Activated naive CD4-positive, alpha-beta T cell treated with anti-CD3 and anti-CD28 coated beads for 36 hours (primary cell): ENCODE measurements at regions of chr12 and their contacts with region 1.

Region 1: DNA sequence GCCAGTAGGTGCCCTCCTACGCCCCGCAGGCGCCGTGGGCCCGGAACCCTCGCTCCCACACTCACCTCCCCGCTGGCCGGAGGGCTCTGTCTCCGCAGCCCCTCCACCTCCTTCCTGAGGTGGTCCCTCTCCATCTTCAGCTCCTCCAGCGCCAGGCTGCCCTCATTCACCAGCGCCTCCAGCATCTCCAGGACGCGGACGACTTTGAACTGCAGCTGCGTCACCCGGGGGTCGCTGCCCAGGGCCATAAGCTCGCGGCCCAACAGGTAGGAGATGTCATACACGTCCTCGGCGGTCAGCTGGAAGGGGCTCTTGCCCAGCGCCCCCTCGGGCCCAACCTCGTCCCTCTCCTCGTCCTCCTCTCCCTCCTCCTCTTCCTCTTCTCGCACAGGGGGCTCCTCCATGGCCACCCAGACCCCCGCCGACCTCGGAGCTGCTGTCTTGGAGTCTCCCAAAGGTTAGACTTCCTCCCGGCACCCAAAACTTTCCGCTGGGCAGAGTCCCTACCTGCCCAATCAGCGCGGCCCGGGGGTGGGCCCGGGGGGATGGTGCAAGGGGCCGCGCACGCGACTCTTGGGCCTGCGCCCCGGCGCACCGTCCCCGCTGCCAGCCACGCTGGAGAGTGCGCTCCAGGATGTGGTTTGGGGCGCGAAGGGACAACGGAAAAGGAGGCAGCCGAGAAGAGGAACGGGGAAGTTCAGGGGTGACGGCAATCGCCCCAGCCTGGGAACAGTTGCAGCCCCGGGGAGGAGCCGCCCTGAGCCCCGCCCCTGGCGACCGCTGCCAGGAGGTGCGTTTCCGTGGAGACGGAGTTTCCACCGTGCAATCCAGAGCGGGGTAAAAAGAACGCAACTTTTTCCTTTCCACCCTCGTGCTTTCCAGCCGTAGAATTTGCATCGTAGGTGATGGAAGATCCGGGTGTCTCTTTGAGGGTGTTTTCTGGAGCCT is at the start of gene RILPL2:
- DNase-seq: peak; percentile 97
- H3K4me3 Mint-ChIP-seq: peak within 1 kb of the TSS; percentile 92
- H3K27ac Mint-ChIP-seq: peak within 1 kb of the TSS; percentile 93
- H3K4me1 Mint-ChIP-seq: peaks cover 43% of the 10 kb centered on the region
- H3K27me3 Mint-ChIP-seq: no peaks in the 10 kb centered on the region
- total RNA-seq, gene RILPL2: 8.1 to 9.1 TPM

Region 2: GRCh38 chr12:122888232-122888867 is 547.9 kb before region 1 on chr12:
- CTCF ChIA-PET with region 1: no interaction called
- intact Hi-C with region 1: loop called (anchors 5 kb)
- DNase-seq: peak; percentile 72
- H3K4me3 Mint-ChIP-seq: peak overlapping the region; percentile 77
- H3K27ac Mint-ChIP-seq: peak overlapping the region; percentile 91
- H3K4me1 Mint-ChIP-seq: peaks cover 79% of the 10 kb centered on the region
- H3K27me3 Mint-ChIP-seq: peaks cover 3% of the 10 kb centered on the region

Region 3: GRCh38 chr12:123337070-123337469 is 99.2 kb before region 1 on chr12:
- CTCF ChIA-PET with region 1: no interaction called
- intact Hi-C with region 1: no loop called
- DNase-seq: no peak
- H3K4me3 Mint-ChIP-seq: no peak overlapping the region
- H3K27ac Mint-ChIP-seq: no peak overlapping the region
- H3K4me1 Mint-ChIP-seq: peaks cover 5% of the 10 kb centered on the region
- H3K27me3 Mint-ChIP-seq: no peaks in the 10 kb centered on the region

Region 4: DNA sequence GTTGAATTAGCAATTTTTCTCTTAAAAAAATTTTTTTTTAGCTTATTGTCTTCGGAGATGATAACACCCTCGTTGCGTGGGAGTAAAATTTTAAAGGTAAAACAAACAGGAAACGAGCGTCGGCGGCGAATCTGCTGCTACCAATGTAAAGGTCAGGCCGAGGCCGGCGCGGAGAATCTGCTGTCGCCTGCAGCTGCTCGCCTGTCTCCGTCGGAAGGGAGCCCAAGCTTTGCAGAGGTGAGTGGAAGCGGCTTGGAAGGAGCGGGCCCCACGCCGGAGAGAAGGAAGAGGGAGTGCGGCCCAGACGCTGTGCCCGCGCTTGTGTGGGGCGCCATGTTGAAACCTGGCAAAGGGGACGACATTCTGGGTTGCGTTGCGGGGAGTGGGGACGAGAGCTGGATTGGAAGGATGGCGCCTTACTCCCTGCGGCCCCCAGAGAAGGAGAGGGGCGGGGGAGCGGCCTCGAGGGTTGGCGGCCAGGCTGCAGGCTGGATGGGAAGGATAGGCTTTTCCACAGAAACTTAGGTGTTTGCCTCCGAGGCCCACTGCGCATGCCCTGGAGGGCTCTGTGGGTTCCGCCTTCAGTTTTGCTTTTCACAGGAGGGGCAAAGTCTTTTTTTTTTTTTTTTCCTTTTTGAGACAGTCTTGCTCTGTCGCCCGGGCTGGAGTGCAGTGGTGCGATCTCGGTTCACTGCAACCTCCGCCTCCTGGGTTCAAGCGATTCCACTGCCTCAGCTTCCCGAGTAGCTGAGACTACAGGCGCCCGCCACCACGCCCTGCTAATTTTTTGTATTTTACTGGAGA is 21.9 kb after region 1 on chr12 and contains the start of gene SNRNP35:
- CTCF ChIA-PET with region 1: interaction called, 4 read pairs
- intact Hi-C with region 1: loop called (anchors 1 kb)
- DNase-seq: peak; percentile 83
- H3K4me3 Mint-ChIP-seq: peak within 1 kb of the TSS; percentile 97
- H3K27ac Mint-ChIP-seq: peak within 1 kb of the TSS; percentile 100
- H3K4me1 Mint-ChIP-seq: peaks cover 25% of the 10 kb centered on the region
- H3K27me3 Mint-ChIP-seq: no peaks in the 10 kb centered on the region
- total RNA-seq, gene SNRNP35: 21.5 to 21.8 TPM

Region 5: DNA sequence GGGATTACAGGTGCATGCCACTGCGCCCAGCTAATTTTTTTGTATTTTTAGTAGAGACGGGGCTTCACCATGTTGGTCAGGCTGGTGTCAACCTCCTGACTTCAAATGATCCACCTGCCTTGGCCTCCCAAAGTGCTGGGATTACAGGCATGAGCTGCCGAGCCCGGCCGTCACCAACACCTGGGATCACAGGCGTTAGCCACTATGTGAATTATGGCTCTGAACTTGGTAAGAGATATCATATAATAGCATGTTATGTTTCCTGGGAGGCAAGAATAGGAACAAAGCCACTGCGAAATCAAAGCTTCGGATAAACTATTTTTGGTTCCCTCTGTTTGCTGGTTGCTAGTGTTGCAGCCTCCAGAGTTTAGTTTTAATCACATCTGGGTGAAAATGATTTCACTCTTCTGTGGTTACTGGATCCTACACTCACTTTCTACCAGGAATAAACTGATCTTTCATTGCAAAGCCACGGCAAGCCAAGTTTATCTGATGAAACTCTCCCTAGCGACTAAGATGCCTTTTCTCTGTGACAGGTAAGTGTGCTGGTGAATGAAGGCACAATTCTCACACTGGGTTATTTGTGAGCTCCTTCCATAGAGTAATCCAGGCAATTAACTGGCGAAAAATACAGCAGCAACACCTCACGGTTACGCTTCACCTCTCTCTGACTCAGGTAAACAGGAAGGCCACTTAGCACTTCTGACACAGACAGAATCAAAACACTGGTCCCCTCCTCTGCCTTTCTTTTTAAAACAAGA is 38.4 kb after region 1 on chr12:
- CTCF ChIA-PET with region 1: no interaction called
- intact Hi-C with region 1: loop called (anchors 1 kb)
- DNase-seq: peak; percentile 38
- H3K4me3 Mint-ChIP-seq: peak overlapping the region; percentile 13
- H3K27ac Mint-ChIP-seq: peak overlapping the region; percentile 79
- H3K4me1 Mint-ChIP-seq: peaks cover 32% of the 10 kb centered on the region
- H3K27me3 Mint-ChIP-seq: no peaks in the 10 kb centered on the region

Region 6: GRCh38 chr12:123533672-123534643 is 97.7 kb after region 1 on chr12 and contains the start of gene RILPL1:
- CTCF ChIA-PET with region 1: no interaction called
- intact Hi-C with region 1: loop called (anchors 2 kb)
- DNase-seq: peak; percentile 30
- H3K4me3 Mint-ChIP-seq: peak within 1 kb of the TSS; percentile 79
- H3K27ac Mint-ChIP-seq: no peak within 1 kb of the TSS
- H3K4me1 Mint-ChIP-seq: peaks cover 16% of the 10 kb centered on the region
- H3K27me3 Mint-ChIP-seq: no peaks in the 10 kb centered on the region
- total RNA-seq, gene RILPL1: 2.2 to 3.2 TPM

Region 7: DNA sequence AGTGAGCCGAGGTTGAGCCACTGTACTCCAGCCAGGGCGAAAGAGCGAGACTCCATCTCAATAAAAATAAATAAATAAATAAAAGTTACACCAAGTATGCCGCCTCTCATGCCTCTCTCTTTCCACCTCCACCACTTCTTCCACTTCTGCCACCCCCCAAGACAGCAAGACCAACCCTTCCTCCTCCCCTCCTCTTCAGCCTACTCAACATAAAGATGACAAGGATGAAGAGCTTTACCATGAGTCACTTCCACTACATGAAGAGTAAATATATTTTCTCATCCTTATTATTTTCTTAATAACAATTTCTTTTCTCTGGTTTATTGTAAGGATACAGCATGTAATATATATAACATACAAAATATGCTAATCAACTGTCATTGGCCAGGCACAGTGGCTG is 144.5 kb after region 1 on chr12:
- CTCF ChIA-PET with region 1: interaction called, 5 read pairs
- intact Hi-C with region 1: loop called (anchors 1 kb)
- DNase-seq: no peak
- H3K4me3 Mint-ChIP-seq: no peak overlapping the region
- H3K27ac Mint-ChIP-seq: no peak overlapping the region
- H3K4me1 Mint-ChIP-seq: peaks cover 22% of the 10 kb centered on the region
- H3K27me3 Mint-ChIP-seq: no peaks in the 10 kb centered on the region

Region 8: DNA sequence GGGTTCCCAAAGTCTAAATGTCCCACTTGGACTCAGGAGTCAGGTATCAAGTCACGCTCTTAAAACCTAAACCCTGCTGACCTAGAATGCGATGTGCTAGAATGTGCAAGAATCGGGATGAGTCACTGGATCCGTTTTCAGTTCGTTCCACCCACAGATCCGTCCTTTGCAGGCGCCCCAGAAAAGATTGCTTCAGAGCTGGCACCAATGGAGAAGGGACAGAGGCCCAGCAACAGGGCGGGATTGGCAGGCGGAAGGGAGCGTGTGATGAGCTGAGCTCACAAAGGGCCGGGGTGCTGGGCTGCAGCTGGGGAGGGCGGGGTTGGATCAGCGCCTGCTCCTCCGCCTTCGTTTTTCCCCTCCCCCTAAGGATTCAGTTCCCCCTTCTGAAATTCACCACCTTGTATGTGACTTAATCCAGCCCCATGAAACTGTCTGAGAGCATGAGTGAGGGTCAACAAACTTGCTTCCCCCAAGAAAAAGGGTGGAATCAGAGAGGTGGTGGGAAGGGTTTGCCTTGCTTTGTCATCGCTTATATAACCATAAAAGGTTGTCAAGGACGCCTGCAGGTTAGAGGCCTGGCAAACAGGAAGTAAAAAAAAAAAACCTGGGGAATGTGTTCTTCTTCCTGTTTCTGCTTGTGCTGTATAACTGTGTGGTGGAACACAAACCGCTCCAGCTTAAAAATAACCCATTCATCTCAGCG is 1481.0 kb after region 1 on chr12:
- CTCF ChIA-PET with region 1: no interaction called
- intact Hi-C with region 1: loop called (anchors 5 kb)
- DNase-seq: peak; percentile 98
- H3K4me3 Mint-ChIP-seq: peak overlapping the region; percentile 73
- H3K27ac Mint-ChIP-seq: peak overlapping the region; percentile 100
- H3K4me1 Mint-ChIP-seq: peaks cover 83% of the 10 kb centered on the region
- H3K27me3 Mint-ChIP-seq: peaks cover 6% of the 10 kb centered on the region